Ovary (tissue), 10 donors: ENCODE measurements at regions of chr18 and their contacts with region 1.

Region 1: GRCh38 chr18:69480460-69480859 is 79.8 kb downstream of the DOK6 start:
- DNase-seq: no peak
- H3K4me3 ChIP-seq: no peak overlapping the region
- H3K27ac ChIP-seq: no peak overlapping the region
- H3K4me1 ChIP-seq: no peaks in the 10 kb centered on the region
- H3K27me3 ChIP-seq: no peaks in the 10 kb centered on the region
- CTCF ChIP-seq: no peak
- EP300 ChIP-seq: no peak
- POLR2A ChIP-seq: no peak

Region 2: GRCh38 chr18:69528435-69528834 is 48.0 kb after region 1 on chr18:
- intact Hi-C with region 1: no loop called
- DNase-seq: no peak
- H3K4me3 ChIP-seq: no peak overlapping the region
- H3K27ac ChIP-seq: no peak overlapping the region
- H3K4me1 ChIP-seq: no peaks in the 10 kb centered on the region
- H3K27me3 ChIP-seq: no peaks in the 10 kb centered on the region
- CTCF ChIP-seq: no peak
- EP300 ChIP-seq: no peak
- POLR2A ChIP-seq: no peak

Region 3: GRCh38 chr18:69585696-69586095 is 105.2 kb after region 1 on chr18:
- intact Hi-C with region 1: loop called in 1 of 4 experiments (anchors 1 kb)
- DNase-seq: no peak
- H3K4me3 ChIP-seq: no peak overlapping the region
- H3K27ac ChIP-seq: no peak overlapping the region
- H3K4me1 ChIP-seq: no peaks in the 10 kb centered on the region
- H3K27me3 ChIP-seq: no peaks in the 10 kb centered on the region
- CTCF ChIP-seq: no peak
- EP300 ChIP-seq: no peak
- POLR2A ChIP-seq: no peak